ENCODE measurements at regions of chr4 and their contacts with region 1.

Region 1: GRCh38 chr4:167196344-167197012 is 37.8 kb downstream of the SPOCK3 start:
- DNase-seq: no peak
- ATAC-seq: no peak
- H3K4me3 ChIP-seq: no peak overlapping the region
- H3K4me3 Mint-ChIP-seq: no peak overlapping the region
- H3K27ac ChIP-seq: no peak overlapping the region
- H3K27ac Mint-ChIP-seq: no peak overlapping the region
- H3K4me1 ChIP-seq: no peaks in the 10 kb centered on the region
- H3K4me1 Mint-ChIP-seq: no peaks in the 10 kb centered on the region
- H3K27me3 ChIP-seq: no peaks in the 10 kb centered on the region
- H3K27me3 Mint-ChIP-seq: no peaks in the 10 kb centered on the region

Region 2: DNA sequence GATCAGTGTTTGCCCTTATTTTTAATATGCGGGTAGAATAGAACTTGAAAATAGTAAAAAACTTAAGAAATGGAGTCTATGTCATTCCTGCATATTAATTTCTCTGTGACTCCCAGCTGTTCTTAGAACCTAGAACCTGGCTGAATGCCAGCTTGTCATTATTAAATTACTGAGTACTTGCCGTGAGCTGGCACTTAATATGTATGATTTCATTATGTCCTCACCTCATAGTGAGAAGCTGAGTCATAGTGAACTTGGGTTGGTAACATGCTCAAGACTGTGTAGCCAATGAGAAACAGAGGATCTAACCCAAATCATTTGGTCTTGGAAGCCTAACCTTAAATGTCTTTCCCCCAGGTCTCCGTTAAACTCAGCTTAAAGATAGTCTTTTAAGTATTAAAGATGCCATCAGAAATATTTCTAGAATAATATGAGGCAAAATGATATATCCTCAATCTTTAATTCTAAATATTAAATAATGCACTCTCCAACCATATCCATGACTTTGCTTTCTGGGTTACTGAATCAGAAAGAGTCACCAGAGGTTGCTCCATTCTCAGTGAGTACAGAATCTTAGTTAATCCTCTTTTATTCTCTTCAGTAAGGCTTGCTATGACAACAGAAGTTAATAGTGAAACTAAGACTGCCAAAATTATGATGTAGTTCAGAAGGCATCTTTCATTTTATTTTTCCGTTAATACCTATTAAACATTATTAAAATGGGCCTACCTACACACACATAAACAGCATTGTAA is 1382.0 kb before region 1 on chr4:
- CTCF ChIA-PET with region 1: no interaction called
- POLR2A ChIA-PET with region 1: no interaction called
- intact Hi-C with region 1: no loop called
- DNase-seq: no peak
- ATAC-seq: no peak
- H3K4me3 ChIP-seq: no peak overlapping the region
- H3K4me3 Mint-ChIP-seq: no peak overlapping the region
- H3K27ac ChIP-seq: no peak overlapping the region
- H3K27ac Mint-ChIP-seq: no peak overlapping the region
- H3K4me1 ChIP-seq: no peaks in the 10 kb centered on the region
- H3K4me1 Mint-ChIP-seq: no peaks in the 10 kb centered on the region
- H3K27me3 ChIP-seq: no peaks in the 10 kb centered on the region
- H3K27me3 Mint-ChIP-seq: peaks cover 0 to 5% (median 0%) of the 10 kb centered on the region in 5 donors

Region 3: GRCh38 chr4:167183036-167183435 is 13.4 kb before region 1 on chr4:
- CTCF ChIA-PET with region 1: no interaction called
- POLR2A ChIA-PET with region 1: no interaction called
- intact Hi-C with region 1: loop called in 1 of 2 experiments (anchors 1 kb)
- DNase-seq: no peak
- ATAC-seq: no peak
- H3K4me3 ChIP-seq: no peak overlapping the region
- H3K4me3 Mint-ChIP-seq: no peak overlapping the region
- H3K27ac ChIP-seq: no peak overlapping the region
- H3K27ac Mint-ChIP-seq: no peak overlapping the region
- H3K4me1 ChIP-seq: no peaks in the 10 kb centered on the region
- H3K4me1 Mint-ChIP-seq: no peaks in the 10 kb centered on the region
- H3K27me3 ChIP-seq: no peaks in the 10 kb centered on the region
- H3K27me3 Mint-ChIP-seq: no peaks in the 10 kb centered on the region

Measured in naive thymus-derived CD4-positive, alpha-beta T cell (primary cell).